ENCODE measurements at regions of chr22 and their contacts with region 1.

Region 1: GRCh38 chr22:41589391-41590241 is at the start of gene PMM1:
- DNase-seq: peak; percentile 100
- H3K4me3 Mint-ChIP-seq: peak within 1 kb of the TSS; percentile 89
- H3K27ac Mint-ChIP-seq: peak within 1 kb of the TSS; percentile 84
- H3K4me1 Mint-ChIP-seq: peaks cover 5% of the 10 kb centered on the region
- H3K27me3 Mint-ChIP-seq: no peaks in the 10 kb centered on the region
- CTCF ChIP-seq: no peak
- total RNA-seq, gene PMM1: 18.0 and 20.6 TPM in 2 replicates

Region 2: GRCh38 chr22:41191467-41191866 is 398.1 kb before region 1 on chr22:
- CTCF ChIA-PET with region 1: no interaction called
- intact Hi-C with region 1: no loop called
- DNase-seq: no peak
- H3K4me3 Mint-ChIP-seq: no peak overlapping the region
- H3K27ac Mint-ChIP-seq: no peak overlapping the region
- H3K4me1 Mint-ChIP-seq: no peaks in the 10 kb centered on the region
- H3K27me3 Mint-ChIP-seq: no peaks in the 10 kb centered on the region
- CTCF ChIP-seq: no peak

Region 3: DNA sequence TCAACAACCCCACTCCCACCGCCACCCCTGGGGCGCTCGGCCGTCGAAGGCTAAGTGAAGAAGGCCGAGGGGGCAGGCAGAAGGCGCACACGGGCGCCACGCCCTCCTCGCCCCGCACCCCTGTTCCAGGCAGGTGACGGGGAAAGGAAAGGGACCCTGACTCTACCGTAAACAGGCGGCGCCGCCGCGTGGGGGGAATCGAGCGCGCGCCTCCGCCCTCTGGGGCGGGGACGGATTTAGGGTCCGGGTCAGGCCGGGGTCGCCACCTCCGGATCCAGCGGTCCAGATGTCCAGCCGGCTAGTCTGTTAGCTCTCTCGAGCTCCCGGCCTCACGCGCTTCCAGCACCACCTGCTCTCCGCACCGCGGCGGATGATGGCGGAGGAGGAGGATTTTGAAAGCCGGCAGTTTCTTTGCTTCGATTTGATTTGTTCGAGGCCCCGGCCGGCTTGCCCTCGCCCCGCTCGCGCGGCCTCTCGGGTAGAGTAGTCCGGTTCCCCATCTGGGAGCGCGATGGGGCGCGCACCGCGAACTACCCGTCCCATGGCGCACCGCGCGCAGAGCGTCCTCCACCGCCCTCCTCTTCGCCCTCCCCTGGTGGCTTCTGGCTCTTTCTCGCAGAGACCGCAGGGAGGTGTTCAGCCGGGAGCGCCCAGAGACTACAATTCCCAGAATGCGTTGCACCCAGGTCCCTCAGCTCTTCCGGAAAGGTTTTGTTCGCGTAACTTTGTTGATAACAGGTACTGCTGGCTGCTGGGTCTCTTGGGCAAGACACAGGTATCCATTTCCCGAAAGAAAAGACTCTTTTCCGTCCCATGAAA is 303.6 kb before region 1 on chr22 and contains the start of gene RANGAP1:
- CTCF ChIA-PET with region 1: no interaction called
- intact Hi-C with region 1: no loop called
- DNase-seq: peak; percentile 98
- H3K4me3 Mint-ChIP-seq: peak within 1 kb of the TSS; percentile 86
- H3K27ac Mint-ChIP-seq: peak within 1 kb of the TSS; percentile 81
- H3K4me1 Mint-ChIP-seq: peaks cover 57% of the 10 kb centered on the region
- H3K27me3 Mint-ChIP-seq: no peaks in the 10 kb centered on the region
- CTCF ChIP-seq: no peak
- total RNA-seq, gene RANGAP1: 189 and 194 TPM in 2 replicates

Region 4: GRCh38 chr22:41543854-41544670 is 45.6 kb before region 1 on chr22 and contains the start of gene POLR3H:
- CTCF ChIA-PET with region 1: interaction called, 11 read pairs
- intact Hi-C with region 1: no loop called
- DNase-seq: peak; percentile 98
- H3K4me3 Mint-ChIP-seq: peak within 1 kb of the TSS; percentile 99
- H3K27ac Mint-ChIP-seq: peak within 1 kb of the TSS; percentile 89
- H3K4me1 Mint-ChIP-seq: peaks cover 35% of the 10 kb centered on the region
- H3K27me3 Mint-ChIP-seq: no peaks in the 10 kb centered on the region
- CTCF ChIP-seq: peak; percentile 59
- total RNA-seq, gene POLR3H: 49.7 and 53.8 TPM in 2 replicates

Region 5: GRCh38 chr22:41656556-41656955 is 66.9 kb after region 1 on chr22:
- CTCF ChIA-PET with region 1: no interaction called
- intact Hi-C with region 1: no loop called
- DNase-seq: no peak
- H3K4me3 Mint-ChIP-seq: no peak overlapping the region
- H3K27ac Mint-ChIP-seq: no peak overlapping the region
- H3K4me1 Mint-ChIP-seq: no peaks in the 10 kb centered on the region
- H3K27me3 Mint-ChIP-seq: no peaks in the 10 kb centered on the region
- CTCF ChIP-seq: no peak

Region 6: DNA sequence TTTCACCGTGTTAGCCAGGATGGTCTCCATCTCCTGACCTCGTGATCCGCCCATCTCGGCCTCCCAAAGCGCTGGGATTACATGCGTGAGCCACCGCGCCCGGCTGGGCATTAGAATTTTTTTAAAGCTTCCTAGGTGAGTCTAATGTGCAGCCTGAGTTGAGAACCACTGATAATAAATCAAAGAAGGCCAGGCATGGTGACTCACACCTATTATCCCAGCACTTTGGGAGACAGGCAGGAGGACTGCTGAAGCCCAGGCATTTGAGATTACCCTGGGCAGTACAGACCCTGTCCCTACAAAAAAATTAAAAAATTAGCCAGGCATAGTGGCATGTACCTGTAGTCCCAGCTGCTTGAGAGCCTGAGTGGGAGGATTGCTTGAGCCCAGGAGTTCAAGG is 123.4 kb after region 1 on chr22:
- CTCF ChIA-PET with region 1: no interaction called
- intact Hi-C with region 1: no loop called
- DNase-seq: no peak
- H3K4me3 Mint-ChIP-seq: no peak overlapping the region
- H3K27ac Mint-ChIP-seq: no peak overlapping the region
- H3K4me1 Mint-ChIP-seq: no peaks in the 10 kb centered on the region
- H3K27me3 Mint-ChIP-seq: peaks cover 26% of the 10 kb centered on the region
- CTCF ChIP-seq: no peak